HAP-1 (cell line): ENCODE measurements at regions of chr16 and their contacts with region 1.

Region 1: GRCh38 chr16:85610508-85611332 is 2.4 kb upstream of the GSE1 start:
- DNase-seq: peak; percentile 74 to 94
- H3K4me3 ChIP-seq: peak overlapping the region; percentile 92
- H3K4me1 ChIP-seq: peaks cover 38% of the 10 kb centered on the region
- H3K27me3 ChIP-seq: no peaks in the 10 kb centered on the region

Region 2: DNA sequence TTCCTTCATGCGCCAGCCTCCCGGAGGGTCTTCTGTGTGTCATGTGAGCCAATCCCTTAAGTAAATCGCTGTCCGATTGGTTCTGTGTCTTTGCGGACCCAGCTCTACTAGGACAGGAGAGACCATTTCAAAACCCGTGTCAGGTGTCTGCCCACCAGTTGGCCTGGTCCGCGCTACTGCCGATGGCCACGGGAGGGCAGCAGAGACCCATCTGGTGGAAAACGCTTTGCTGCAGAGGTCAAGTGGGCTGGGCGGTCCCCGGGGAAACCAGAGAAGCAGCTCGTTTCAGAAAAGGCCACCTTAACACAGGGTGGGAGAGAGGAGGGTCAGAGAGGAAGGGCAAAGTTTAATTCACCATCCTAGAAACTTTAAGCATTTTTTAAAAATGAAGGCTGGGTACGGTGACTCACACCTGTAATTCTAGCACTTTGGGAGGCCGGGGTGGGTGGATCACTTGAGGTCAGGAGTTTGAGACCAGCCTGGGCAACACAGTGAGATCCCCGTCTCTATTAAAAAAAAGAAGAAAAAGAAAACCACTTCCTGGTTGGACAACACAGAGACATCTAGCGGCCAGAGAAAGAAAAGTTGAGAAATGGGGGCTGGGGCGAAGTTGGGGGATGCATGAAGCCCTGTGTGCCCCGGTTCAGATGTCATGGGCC is 495.7 kb before region 1 on chr16:
- in situ Hi-C with region 1: loop called (anchors 10 kb)
- DNase-seq: peak; percentile 82 to 97
- H3K4me3 ChIP-seq: no peak overlapping the region
- H3K4me1 ChIP-seq: peaks cover 3% of the 10 kb centered on the region
- H3K27me3 ChIP-seq: no peaks in the 10 kb centered on the region

Region 3: DNA sequence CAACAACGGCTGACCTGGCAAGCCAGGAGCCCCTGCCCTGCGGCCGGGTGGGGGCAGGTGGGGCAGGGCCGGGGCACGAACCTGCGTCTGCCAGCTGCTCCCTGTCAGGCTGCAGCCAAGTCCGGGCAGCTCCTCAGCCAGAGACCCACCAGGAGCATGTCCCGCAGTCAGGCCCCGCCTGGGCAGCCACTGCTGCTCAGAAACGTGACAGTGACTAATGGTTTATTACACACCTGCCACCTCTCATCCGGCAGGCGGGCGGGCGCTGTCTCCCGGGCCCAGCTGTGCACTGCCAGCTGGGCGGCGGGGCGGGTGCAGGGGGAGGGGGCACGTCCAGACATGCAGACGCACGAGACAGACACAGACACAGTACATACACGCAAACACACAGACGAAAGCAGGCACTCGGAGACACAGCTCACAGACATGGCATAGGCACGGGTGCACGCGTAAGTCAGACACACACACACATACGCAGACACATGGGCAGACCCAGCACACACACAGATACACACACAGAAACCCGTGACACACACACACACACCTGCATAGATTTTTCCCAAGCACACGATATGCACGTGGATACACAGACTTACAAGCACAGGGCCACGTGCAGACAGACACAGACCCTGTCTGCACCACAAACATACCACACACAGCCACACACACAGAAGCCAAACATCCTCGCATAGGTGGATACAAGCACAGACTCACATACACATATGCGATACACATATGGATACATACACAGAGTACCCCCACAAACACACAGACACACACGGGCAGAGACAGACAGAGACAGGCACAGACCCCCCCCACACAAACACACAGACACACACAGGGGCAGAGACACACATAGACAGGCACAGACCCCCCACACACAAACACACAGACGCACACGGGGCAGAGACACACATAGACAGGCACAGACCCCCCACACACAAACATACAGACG is 250.1 kb before region 1 on chr16:
- in situ Hi-C with region 1: no loop called
- DNase-seq: no peak
- H3K4me3 ChIP-seq: no peak overlapping the region
- H3K4me1 ChIP-seq: no peaks in the 10 kb centered on the region
- H3K27me3 ChIP-seq: no peaks in the 10 kb centered on the region

Region 4: DNA sequence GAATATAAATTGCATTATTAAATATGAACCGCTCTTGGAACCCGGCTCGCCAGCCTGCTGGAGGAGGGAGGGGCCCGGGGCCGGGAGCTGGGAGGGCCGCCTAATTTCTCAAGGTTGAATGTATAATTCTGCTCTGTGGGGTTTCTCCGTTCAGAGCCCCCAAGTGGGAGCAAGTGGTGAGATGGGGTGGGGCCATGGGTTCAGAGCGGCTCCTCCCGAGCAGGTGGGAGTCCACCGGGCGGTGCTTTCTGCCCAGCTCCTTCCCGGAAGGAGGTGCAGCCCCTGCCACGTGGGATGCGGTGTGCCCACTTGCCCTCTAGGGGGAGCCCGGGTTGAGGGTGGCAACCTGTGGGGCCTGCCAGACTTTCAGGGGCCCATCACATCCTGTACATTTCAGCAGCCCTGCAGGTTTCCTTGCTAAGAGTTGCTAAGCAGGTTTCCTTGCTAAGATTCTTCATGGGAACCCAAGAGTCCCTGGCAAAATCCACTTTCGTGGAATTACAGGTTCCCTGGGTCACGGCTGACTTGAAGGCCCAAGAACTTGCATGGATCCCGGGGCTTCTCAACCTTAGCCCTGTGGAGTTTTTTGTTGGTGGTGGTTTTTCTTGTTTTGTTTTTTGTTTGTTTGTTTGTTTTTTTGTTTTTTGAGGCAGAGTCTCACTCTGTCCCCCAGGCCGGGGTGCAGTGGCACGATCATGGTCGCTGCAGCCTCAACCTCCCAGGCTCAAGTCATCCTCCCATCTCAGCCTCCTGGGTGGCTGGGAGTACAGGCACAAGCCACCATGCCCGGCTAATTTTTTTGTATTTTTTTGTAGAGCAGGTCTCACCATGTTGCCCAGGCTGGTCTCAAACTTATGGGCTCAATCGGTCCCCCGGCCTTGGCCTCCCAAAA is 194.2 kb before region 1 on chr16:
- in situ Hi-C with region 1: loop called (anchors 10 kb)
- DNase-seq: peak; percentile 17 to 85
- H3K4me3 ChIP-seq: no peak overlapping the region
- H3K4me1 ChIP-seq: no peaks in the 10 kb centered on the region; the same call in 1 of the 2 replicates
- H3K27me3 ChIP-seq: no peaks in the 10 kb centered on the region

Region 5: GRCh38 chr16:85554814-85555543 is 55.7 kb before region 1 on chr16:
- in situ Hi-C with region 1: loop called (anchors 5 kb)
- DNase-seq: no peak
- H3K4me3 ChIP-seq: peak overlapping the region; percentile 61
- H3K4me1 ChIP-seq: peaks cover 23% of the 10 kb centered on the region
- H3K27me3 ChIP-seq: no peaks in the 10 kb centered on the region